CD14-positive monocyte (primary cell): ENCODE measurements at regions of chr12 and their contacts with region 1.

Region 1: DNA sequence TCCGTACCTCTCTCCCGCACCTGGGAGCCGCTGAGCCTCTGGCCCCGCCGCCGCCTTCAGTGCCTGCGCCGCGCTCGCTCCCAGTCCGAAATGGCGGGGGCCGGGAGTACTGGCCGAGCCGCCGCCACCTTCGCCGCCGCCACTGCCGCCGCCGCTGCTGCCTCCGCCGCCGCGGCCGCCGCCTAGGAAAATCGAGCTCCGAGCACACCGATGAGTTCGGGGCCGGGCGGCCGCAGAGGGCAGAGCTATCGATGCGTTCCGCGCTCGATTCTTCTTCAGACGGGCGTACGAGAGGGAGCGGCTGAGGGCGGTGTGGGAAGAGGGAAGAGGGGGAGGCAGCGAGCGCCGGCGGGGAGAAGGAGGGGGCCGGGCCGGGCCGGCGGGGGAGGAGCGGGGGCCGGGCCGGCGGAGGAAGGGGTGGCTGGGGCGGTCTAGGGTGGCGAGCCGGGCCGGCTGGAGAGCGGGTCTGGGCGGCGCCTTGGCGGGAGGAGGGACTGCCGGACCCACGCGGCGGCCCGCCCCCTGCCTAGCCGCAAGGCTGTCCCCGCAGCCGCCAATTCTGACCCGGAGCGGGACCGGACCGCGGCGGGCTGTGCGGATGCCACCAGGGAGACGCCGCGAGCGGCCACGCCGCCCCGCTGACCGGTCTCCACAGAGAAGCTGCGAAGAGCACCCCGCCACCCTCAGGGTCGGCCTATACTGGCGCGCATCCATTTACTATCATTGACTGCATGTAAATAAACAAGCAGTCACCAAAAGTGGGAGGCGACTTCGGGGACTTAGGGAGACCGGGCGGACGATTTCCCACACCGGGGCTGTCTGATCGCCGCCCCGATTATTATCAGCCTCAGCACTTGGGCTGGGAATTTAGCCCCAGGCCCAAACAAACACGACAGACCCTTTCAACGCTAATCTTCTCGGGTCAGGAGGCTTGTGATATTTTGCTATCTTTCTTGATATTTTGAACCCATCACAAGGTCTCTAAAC is at the start of gene KRAS:
- DNase-seq: peak; percentile 93 to 96 (median 96)
- H3K4me3 ChIP-seq: peak within 1 kb of the TSS; percentile 67 to 95 (median 94)
- H3K4me3 Mint-ChIP-seq: peak within 1 kb of the TSS; percentile 91 to 94
- H3K27ac ChIP-seq: peak within 1 kb of the TSS; percentile 52 to 91
- H3K27ac Mint-ChIP-seq: peak within 1 kb of the TSS; percentile 85 to 98 (median 95)
- H3K4me1 ChIP-seq: peaks cover 13 to 22% of the 10 kb centered on the region in 2 donors
- H3K4me1 Mint-ChIP-seq: peaks cover 28% of the 10 kb centered on the region
- H3K27me3 ChIP-seq: no peaks in the 10 kb centered on the region
- H3K27me3 Mint-ChIP-seq: peaks cover 0 to 9% (median 2%) of the 10 kb centered on the region in 3 donors
- CTCF ChIP-seq: no peak
- polyA plus RNA-seq, gene KRAS: 12.1 to 37.4 (median 33.0) TPM

Region 2: DNA sequence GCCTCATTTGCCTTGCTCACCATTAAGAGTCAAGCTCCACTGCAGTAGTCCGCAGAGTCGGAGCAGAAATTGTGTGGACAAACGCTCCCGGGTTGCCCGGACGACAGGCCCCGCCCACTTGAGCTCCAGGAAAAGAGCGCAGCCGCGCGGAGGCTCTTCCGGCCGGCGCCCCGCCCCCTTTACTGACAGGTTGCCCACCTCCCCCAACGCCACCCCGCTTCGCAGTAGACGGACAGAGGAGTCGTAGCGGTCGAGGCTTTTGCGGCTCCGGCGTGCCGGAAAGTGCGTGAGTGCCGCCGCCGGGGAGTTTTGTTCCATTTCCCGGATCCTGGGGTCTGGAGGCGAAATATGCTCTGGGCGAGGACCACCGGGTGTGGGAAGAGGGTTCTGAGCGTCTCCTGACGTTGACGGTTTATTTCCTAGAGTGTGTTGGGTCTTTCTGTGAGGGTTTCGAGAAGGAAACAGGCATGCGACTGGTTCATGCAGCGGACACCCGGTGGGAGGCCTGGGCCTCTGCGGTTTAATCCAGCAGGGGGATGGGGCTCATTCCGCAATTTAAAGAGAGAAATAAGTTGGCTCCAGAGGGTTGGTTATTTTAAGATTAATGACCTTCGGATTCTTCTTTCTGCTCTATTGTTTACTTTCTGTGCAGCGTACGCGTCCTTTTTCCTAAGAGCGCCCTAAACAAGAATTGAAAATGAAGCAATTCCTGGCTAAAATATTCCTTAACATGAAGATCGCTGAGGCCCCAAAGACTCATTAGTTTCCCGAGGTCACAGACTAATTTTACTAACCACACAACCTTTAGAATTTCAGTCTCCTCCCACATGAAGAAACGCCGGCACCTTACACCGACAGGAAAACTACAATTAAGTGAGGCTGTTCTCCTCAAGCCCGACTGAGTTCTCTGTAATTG is 55.7 kb before region 1 on chr12 and contains the starts of genes DNAI7 and ETFRF1:
- intact Hi-C with region 1: loop called in 1 of 2 experiments (anchors 10 kb)
- DNase-seq: peak; percentile 92 to 95 (median 94)
- H3K4me3 ChIP-seq: peak within 1 kb of the TSS; percentile 82 to 90 (median 89)
- H3K4me3 Mint-ChIP-seq: peak within 1 kb of the TSS; percentile 97 to 99
- H3K27ac ChIP-seq: peak within 1 kb of the TSS; percentile 78 to 91
- H3K27ac Mint-ChIP-seq: peak within 1 kb of the TSS; percentile 93 to 99 (median 97)
- H3K4me1 ChIP-seq: peaks cover 14 to 20% of the 10 kb centered on the region in 2 donors
- H3K4me1 Mint-ChIP-seq: peaks cover 24% of the 10 kb centered on the region
- H3K27me3 ChIP-seq: no peaks in the 10 kb centered on the region
- H3K27me3 Mint-ChIP-seq: peaks cover 0 to 2% (median 1%) of the 10 kb centered on the region in 3 donors
- CTCF ChIP-seq: no peak
- polyA plus RNA-seq, gene DNAI7: not detected
- polyA plus RNA-seq, gene ETFRF1: 9.8 to 28.9 (median 16.0) TPM

Region 3: GRCh38 chr12:25332143-25332542 is 81.1 kb after region 1 on chr12:
- intact Hi-C with region 1: loop called (anchors 5 to 10 kb)
- DNase-seq: no peak
- H3K4me3 ChIP-seq: no peak overlapping the region
- H3K4me3 Mint-ChIP-seq: no peak overlapping the region
- H3K27ac ChIP-seq: no peak overlapping the region
- H3K27ac Mint-ChIP-seq: no peak overlapping the region
- H3K4me1 ChIP-seq: peaks cover 8 to 18% of the 10 kb centered on the region in 2 donors
- H3K4me1 Mint-ChIP-seq: peaks cover 11% of the 10 kb centered on the region
- H3K27me3 ChIP-seq: no peaks in the 10 kb centered on the region
- H3K27me3 Mint-ChIP-seq: peaks cover 0 to 5% (median 0%) of the 10 kb centered on the region in 3 donors
- CTCF ChIP-seq: no peak

Region 4: GRCh38 chr12:25337916-25338315 is 86.9 kb after region 1 on chr12:
- intact Hi-C with region 1: loop called (anchors 5 to 10 kb)
- DNase-seq: no peak
- H3K4me3 ChIP-seq: no peak overlapping the region
- H3K4me3 Mint-ChIP-seq: no peak overlapping the region
- H3K27ac ChIP-seq: no peak overlapping the region
- H3K27ac Mint-ChIP-seq: no peak overlapping the region
- H3K4me1 ChIP-seq: peaks cover 8 to 16% of the 10 kb centered on the region in 2 donors
- H3K4me1 Mint-ChIP-seq: peaks cover 7% of the 10 kb centered on the region
- H3K27me3 ChIP-seq: no peaks in the 10 kb centered on the region
- H3K27me3 Mint-ChIP-seq: peaks cover 0 to 2% (median 0%) of the 10 kb centered on the region in 3 donors
- CTCF ChIP-seq: no peak